B cell (primary cell): ENCODE measurements at regions of chr12 and their contacts with region 1.

Region 1: GRCh38 chr12:93419388-93420034 is 22.2 kb downstream of the UBE2N start:
- DNase-seq: peak; percentile 72
- ATAC-seq: peak; percentile 74
- H3K4me3 ChIP-seq: no peak overlapping the region
- H3K4me3 Mint-ChIP-seq: peak overlapping the region; percentile 29
- H3K27ac ChIP-seq: peak overlapping the region in 1 of 2 donors; percentile 8
- H3K27ac Mint-ChIP-seq: peak overlapping the region; percentile 23
- H3K4me1 ChIP-seq: peaks cover 38 to 60% of the 10 kb centered on the region in 2 donors
- H3K4me1 Mint-ChIP-seq: peaks cover 83% of the 10 kb centered on the region
- H3K27me3 ChIP-seq: no peaks in the 10 kb centered on the region
- H3K27me3 Mint-ChIP-seq: no peaks in the 10 kb centered on the region
- CTCF ChIP-seq: peak; percentile 78

Region 2: DNA sequence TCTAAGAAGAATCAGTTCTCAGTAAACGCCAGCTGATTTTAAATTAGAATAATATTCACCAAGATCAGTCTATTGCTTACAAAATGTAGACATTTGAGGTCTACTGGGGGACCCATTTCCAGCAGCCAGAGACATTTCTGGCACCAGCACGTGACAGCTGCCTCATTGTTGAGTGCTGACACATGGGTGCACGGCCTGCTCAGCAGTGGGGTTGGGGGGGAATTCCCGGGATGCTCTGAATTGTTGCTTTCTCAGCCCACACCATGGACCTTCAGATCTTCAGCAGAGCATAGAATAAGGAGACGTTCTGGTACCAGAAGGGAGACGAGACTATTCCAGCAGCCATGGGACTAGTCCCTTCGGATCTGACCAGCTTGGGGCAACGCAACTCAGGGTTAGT is 698.4 kb before region 1 on chr12:
- CTCF ChIA-PET with region 1: no interaction called
- POLR2A ChIA-PET with region 1: interaction called, 13 read pairs
- intact Hi-C with region 1: no loop called
- DNase-seq: no peak
- ATAC-seq: no peak
- H3K4me3 ChIP-seq: no peak overlapping the region
- H3K4me3 Mint-ChIP-seq: no peak overlapping the region
- H3K27ac ChIP-seq: no peak overlapping the region
- H3K27ac Mint-ChIP-seq: no peak overlapping the region
- H3K4me1 ChIP-seq: no peaks in the 10 kb centered on the region
- H3K4me1 Mint-ChIP-seq: no peaks in the 10 kb centered on the region
- H3K27me3 ChIP-seq: no peaks in the 10 kb centered on the region
- H3K27me3 Mint-ChIP-seq: no peaks in the 10 kb centered on the region
- CTCF ChIP-seq: no peak

Region 3: DNA sequence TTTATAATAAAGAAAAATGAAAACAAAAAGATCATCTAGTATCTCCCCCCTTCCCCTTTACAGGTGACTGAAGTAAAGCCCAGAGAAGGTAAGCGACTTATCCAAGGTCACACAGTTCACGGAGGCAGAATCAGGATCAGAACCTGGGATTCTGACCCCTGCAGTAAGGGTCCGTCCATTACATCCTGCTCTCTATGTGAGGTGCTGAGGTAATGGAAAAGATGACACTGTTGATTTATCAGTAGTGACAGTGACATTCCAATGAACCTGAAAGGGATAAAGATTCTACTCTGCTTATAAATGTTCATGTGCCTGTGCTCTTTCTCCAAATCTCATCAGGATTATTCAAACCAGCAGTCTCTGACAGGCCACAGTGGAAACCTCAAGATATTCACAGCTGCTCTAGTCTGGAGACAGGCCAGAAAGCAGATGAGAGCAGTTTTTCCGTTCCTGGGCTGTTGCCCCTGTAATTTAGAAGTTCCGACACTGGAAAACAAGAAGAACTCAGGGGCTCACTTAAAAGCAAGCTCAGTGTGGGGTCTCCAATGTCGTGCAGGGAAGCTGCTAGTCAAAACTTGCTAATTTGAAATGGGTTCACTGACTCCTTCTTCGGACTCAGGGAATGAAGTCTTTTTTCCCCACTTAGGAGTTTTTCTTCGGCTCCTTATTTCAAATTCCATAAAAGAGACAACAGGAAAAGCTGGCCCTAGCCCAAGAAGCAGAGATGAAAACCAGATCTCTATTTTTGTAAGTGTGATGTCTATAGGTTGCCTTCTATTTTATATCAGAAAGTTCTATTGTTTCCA is 358.6 kb before region 1 on chr12:
- CTCF ChIA-PET with region 1: no interaction called
- POLR2A ChIA-PET with region 1: no interaction called
- intact Hi-C with region 1: no loop called
- DNase-seq: no peak
- ATAC-seq: peak; percentile 23
- H3K4me3 ChIP-seq: no peak overlapping the region
- H3K4me3 Mint-ChIP-seq: no peak overlapping the region
- H3K27ac ChIP-seq: no peak overlapping the region
- H3K27ac Mint-ChIP-seq: no peak overlapping the region
- H3K4me1 ChIP-seq: peaks cover 14 to 20% of the 10 kb centered on the region in 2 donors
- H3K4me1 Mint-ChIP-seq: peaks cover 20% of the 10 kb centered on the region
- H3K27me3 ChIP-seq: peaks cover 0 to 7% (median 3%) of the 10 kb centered on the region in 4 experiments
- H3K27me3 Mint-ChIP-seq: peaks cover 24% of the 10 kb centered on the region
- CTCF ChIP-seq: no peak

Region 4: DNA sequence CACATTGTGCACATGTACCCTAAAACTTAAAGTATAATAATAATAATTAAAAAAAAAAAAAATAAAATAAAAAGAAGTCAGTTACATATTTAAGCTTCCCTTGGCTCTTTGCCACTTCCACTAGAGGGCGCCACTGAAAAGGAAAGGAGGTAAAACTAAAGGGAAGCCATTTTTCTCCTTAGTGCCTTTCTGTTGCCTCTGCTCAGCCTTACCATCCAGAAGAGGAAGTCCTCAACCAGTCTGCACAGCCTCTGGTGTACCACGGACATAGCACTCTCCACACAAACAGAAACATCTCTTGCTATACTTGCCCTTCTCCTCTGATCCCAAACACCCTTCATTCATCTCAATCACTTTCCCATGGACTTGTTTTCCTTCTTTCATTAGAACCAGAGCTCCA is 321.4 kb before region 1 on chr12:
- CTCF ChIA-PET with region 1: interaction called, 15 read pairs
- POLR2A ChIA-PET with region 1: no interaction called
- intact Hi-C with region 1: loop called (anchors 1 kb)
- DNase-seq: peak; percentile 90
- ATAC-seq: peak; percentile 97
- H3K4me3 ChIP-seq: no peak overlapping the region
- H3K4me3 Mint-ChIP-seq: peak overlapping the region; percentile 36
- H3K27ac ChIP-seq: no peak overlapping the region
- H3K27ac Mint-ChIP-seq: peak overlapping the region; percentile 73
- H3K4me1 ChIP-seq: peaks cover 13 to 14% of the 10 kb centered on the region in 2 donors
- H3K4me1 Mint-ChIP-seq: peaks cover 22% of the 10 kb centered on the region
- H3K27me3 ChIP-seq: no peaks in the 10 kb centered on the region
- H3K27me3 Mint-ChIP-seq: no peaks in the 10 kb centered on the region
- CTCF ChIP-seq: peak; percentile 83

Region 5: DNA sequence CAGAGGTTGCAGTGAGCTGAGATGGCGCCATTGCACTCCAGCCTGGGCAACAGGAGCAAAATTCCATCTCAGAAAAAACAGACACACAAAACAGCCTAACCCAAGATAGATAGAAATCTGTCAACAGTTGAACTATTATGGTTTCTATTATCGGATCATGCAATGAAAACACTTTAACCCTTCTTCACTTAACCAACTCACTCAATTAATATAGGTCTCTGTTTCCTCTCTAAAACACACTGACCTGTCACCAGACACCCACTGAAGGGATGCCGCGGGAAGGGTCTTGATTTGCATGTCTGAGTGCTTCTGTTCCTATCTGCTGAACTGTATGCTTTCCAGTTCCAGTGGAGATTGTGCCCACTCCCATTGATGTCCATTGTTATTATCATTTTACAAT is 79.8 kb before region 1 on chr12:
- CTCF ChIA-PET with region 1: no interaction called
- POLR2A ChIA-PET with region 1: no interaction called
- intact Hi-C with region 1: no loop called
- DNase-seq: no peak
- ATAC-seq: no peak
- H3K4me3 ChIP-seq: no peak overlapping the region
- H3K4me3 Mint-ChIP-seq: no peak overlapping the region
- H3K27ac ChIP-seq: no peak overlapping the region
- H3K27ac Mint-ChIP-seq: no peak overlapping the region
- H3K4me1 ChIP-seq: no peaks in the 10 kb centered on the region
- H3K4me1 Mint-ChIP-seq: no peaks in the 10 kb centered on the region
- H3K27me3 ChIP-seq: no peaks in the 10 kb centered on the region
- H3K27me3 Mint-ChIP-seq: peaks cover 8% of the 10 kb centered on the region
- CTCF ChIP-seq: no peak

Region 6: GRCh38 chr12:93361151-93361919 is 58.2 kb before region 1 on chr12:
- CTCF ChIA-PET with region 1: no interaction called
- POLR2A ChIA-PET with region 1: no interaction called
- intact Hi-C with region 1: no loop called
- DNase-seq: no peak
- ATAC-seq: no peak
- H3K4me3 ChIP-seq: no peak overlapping the region
- H3K4me3 Mint-ChIP-seq: no peak overlapping the region
- H3K27ac ChIP-seq: no peak overlapping the region
- H3K27ac Mint-ChIP-seq: no peak overlapping the region
- H3K4me1 ChIP-seq: peaks cover 8 to 10% of the 10 kb centered on the region in 2 donors
- H3K4me1 Mint-ChIP-seq: peaks cover 4% of the 10 kb centered on the region
- H3K27me3 ChIP-seq: no peaks in the 10 kb centered on the region
- H3K27me3 Mint-ChIP-seq: no peaks in the 10 kb centered on the region
- CTCF ChIP-seq: no peak

Region 7: DNA sequence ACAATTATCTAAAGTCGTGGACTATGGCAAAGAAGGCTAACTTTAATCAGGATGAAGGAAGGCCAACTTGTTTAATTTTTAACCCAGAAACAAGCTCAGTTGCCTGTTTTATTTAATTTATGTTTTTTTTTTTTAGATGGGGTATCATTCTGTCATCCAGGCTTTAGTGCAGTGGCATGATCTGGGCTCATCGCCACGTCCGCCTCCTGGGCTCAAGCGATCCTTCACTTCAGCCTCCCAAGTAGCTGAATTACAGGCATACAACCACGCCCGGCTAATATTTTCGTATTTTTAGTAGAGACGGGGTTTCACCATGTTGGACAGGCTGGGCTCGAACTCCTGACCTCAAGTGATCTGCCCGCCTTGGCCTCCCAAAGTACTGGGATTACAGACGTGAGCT is 22.1 kb before region 1 on chr12:
- CTCF ChIA-PET with region 1: interaction called, 37 read pairs
- POLR2A ChIA-PET with region 1: interaction called, 4 read pairs
- intact Hi-C with region 1: no loop called
- DNase-seq: no peak
- ATAC-seq: no peak
- H3K4me3 ChIP-seq: no peak overlapping the region
- H3K4me3 Mint-ChIP-seq: no peak overlapping the region
- H3K27ac ChIP-seq: no peak overlapping the region
- H3K27ac Mint-ChIP-seq: no peak overlapping the region
- H3K4me1 ChIP-seq: no peaks in the 10 kb centered on the region
- H3K4me1 Mint-ChIP-seq: peaks cover 9% of the 10 kb centered on the region
- H3K27me3 ChIP-seq: no peaks in the 10 kb centered on the region
- H3K27me3 Mint-ChIP-seq: no peaks in the 10 kb centered on the region
- CTCF ChIP-seq: no peak

Region 8: GRCh38 chr12:93434256-93434865 is 14.8 kb after region 1 on chr12:
- CTCF ChIA-PET with region 1: interaction called, 44 read pairs
- POLR2A ChIA-PET with region 1: interaction called, 7 read pairs
- intact Hi-C with region 1: loop called (anchors 2 kb)
- DNase-seq: no peak
- ATAC-seq: no peak
- H3K4me3 ChIP-seq: peak overlapping the region in 3 of 5 experiments; percentile 17 to 37 (median 33)
- H3K4me3 Mint-ChIP-seq: peak overlapping the region; percentile 76
- H3K27ac ChIP-seq: peak overlapping the region; percentile 58 to 83
- H3K27ac Mint-ChIP-seq: peak overlapping the region; percentile 72
- H3K4me1 ChIP-seq: peaks cover 79 to 82% of the 10 kb centered on the region in 2 donors
- H3K4me1 Mint-ChIP-seq: peaks cover 81% of the 10 kb centered on the region
- H3K27me3 ChIP-seq: no peaks in the 10 kb centered on the region
- H3K27me3 Mint-ChIP-seq: no peaks in the 10 kb centered on the region
- CTCF ChIP-seq: no peak